Dorsolateral prefrontal cortex (tissue), 120 donors: ENCODE measurements at regions of chr12 and their contacts with region 1.

Region 1: DNA sequence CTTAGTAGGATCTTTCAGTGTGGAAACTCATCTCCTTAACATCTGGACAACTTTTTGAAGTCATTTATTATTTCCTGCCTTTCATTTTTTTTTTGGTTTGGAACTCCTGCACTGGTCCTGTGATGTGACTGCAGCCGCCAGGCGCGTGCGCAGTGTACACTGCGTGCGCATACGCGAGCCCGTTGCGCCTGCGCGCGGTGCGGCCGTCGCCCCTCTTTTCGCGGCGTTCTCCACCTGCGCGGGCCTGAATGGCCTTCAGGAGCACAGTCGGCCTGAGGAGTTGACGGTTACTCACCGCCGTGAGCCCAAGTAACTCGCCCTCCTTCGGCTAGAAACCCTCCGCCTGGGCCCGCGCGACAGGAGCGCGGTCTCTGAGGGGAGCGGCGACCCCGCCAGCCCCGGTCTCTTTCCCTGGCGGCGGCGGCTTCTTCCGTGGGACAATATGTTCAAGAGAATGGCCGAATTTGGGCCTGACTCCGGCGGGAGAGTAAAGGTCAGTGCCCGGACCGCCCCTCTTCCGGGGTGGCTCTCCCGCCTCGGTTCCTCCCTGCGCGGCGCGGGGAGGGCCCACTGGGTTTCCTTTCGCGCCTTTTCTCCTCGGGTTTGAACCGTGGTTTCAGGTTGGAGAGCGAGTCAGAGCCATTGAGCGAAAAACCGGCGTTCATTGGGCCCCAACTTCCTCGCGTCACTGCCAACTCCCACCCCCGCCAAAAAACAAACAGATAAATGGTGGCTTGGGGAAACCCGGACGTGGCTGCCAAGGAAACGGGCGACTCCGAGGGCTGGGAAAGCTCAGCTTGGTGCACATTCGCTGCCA is at the start of gene YEATS4:
- DNase-seq: peak; percentile 71 to 89 (median 80)
- H3K4me3 ChIP-seq: peak within 1 kb of the TSS; percentile 67 to 100 (median 92)
- H3K27ac ChIP-seq: peak within 1 kb of the TSS; percentile 79 to 100 (median 97)
- H3K27me3 ChIP-seq: no peaks in the 10 kb centered on the region
- CTCF ChIP-seq: peak in 38 of 56 donors; percentile 2 to 58 (median 31)
- total RNA-seq, gene YEATS4: 5.6 to 22.9 (median 12.7) TPM

Region 2: GRCh38 chr12:69157023-69157655 is 202.6 kb before region 1 on chr12:
- intact Hi-C with region 1: loop called in 1 of 2 experiments (anchors 10 kb)
- DNase-seq: peak; percentile 44 to 89 (median 80)
- H3K4me3 ChIP-seq: peak overlapping the region in 45 of 59 donors; percentile 5 to 55 (median 33)
- H3K27ac ChIP-seq: peak overlapping the region in 2 of 59 donors; percentile 7 to 8
- H3K27me3 ChIP-seq: no peaks in the 10 kb centered on the region
- CTCF ChIP-seq: peak; percentile 58 to 97 (median 90)

Region 3: GRCh38 chr12:69290545-69291277 is 69.0 kb before region 1 on chr12:
- intact Hi-C with region 1: loop called in 1 of 2 experiments (anchors 5 kb)
- DNase-seq: peak; percentile 18 to 79 (median 66)
- H3K4me3 ChIP-seq: no peak overlapping the region
- H3K27ac ChIP-seq: no peak overlapping the region
- H3K27me3 ChIP-seq: peaks cover 0 to 18% (median 0%) of the 10 kb centered on the region in 45 donors
- CTCF ChIP-seq: peak; percentile 30 to 94 (median 83)

Region 4: DNA sequence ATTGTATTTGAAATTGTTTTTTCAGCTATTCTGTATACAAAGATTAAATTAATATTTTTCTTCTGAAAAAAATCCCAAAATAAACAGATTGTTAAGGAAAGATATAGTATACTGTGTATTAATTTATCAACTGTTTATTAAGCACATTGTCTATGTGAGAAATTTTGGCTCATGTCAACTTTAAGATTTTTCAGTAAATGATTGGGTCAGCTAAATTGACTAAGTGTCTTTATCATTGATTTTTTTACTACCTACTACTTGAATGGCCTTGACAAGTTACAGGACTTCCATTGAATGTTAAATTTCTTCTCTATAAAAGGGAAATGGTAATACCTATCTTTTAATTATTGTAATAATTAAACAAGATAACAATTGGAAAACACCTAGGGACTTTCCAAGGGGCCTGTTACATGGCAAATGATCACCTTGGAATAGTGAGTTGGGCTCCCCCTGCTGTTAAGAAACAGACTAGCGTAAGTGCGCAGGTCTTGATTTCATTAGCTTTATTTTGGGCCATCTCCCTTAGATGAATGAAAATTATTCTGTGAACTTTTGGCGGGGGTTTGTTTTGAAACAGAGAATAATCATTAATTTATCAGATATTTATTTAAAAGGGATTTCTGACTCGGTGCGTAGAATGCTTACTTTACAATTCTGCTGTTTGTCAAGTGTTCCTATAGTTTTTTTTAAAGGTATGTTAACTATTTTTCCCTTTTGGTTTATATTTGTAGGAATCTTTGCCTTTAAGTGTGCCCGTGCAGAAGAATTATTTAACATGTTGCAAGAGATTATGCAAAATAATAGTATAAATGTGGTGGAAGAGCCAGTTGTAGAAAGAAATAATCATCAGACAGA is 211.0 kb after region 1 on chr12:
- intact Hi-C with region 1: loop called in 1 of 2 experiments (anchors 10 kb)
- DNase-seq: peak in 4 of 10 donors; percentile 11 to 63 (median 54)
- H3K4me3 ChIP-seq: no peak overlapping the region
- H3K27ac ChIP-seq: no peak overlapping the region
- H3K27me3 ChIP-seq: no peaks in the 10 kb centered on the region
- CTCF ChIP-seq: peak; percentile 52 to 94 (median 79)

Region 5: DNA sequence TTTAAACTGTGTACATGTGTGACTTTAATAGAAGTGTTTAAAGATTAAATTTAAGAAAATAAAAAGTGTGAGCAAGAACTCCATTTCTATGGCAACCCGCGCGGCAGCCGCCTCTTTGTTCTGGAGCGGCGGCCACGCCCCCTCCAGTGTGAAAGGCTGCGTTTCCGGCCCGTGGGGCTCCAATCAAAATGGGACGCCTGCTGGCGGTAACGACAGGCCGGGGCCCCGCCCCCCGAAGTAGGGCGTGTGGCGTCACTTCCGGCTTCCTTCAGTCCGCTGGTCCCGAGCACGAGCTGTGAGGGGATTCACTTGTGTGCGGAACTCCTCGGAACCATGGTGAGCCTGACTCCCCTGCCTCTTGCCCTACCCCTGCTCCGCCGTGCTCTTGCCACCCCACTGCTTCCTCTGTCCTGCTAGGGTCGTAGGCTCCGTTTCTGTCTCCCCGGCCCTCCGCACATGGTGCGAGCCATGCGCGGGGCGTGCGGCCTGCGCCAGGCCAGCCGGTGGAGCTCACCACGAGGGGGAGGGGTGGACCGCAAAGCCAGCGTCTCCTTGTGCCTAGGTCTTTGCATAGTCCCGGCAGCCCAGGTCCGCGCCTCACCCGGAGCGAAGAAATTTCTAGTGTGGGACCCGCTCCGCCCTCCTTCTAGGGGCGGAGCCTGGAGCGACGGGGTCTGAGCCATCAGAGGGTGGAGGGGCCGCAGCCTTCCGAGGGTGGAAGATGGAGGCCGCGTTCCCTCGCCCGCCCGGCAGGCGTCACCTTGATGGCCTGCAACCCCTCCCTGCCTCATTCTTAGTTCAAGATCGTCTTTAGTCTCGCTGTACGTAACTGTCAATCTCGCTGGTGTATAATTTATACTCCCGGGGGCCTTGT is 225.7 kb after region 1 on chr12 and contains the start of gene CCT2:
- intact Hi-C with region 1: loop called in 1 of 2 experiments (anchors 5 kb)
- DNase-seq: peak; percentile 97 to 99 (median 98)
- H3K4me3 ChIP-seq: peak within 1 kb of the TSS; percentile 63 to 100 (median 95)
- H3K27ac ChIP-seq: peak within 1 kb of the TSS in 56 of 59 donors; percentile 5 to 96 (median 83)
- H3K27me3 ChIP-seq: no peaks in the 10 kb centered on the region
- CTCF ChIP-seq: peak in 51 of 56 donors; percentile 6 to 66 (median 39)
- total RNA-seq, gene CCT2: 66.9 to 156 (median 104) TPM

Region 6: GRCh38 chr12:69639400-69640016 is 279.8 kb after region 1 on chr12:
- intact Hi-C with region 1: loop called in 1 of 2 experiments (anchors 5 kb)
- DNase-seq: peak in 7 of 10 donors; percentile 26 to 70 (median 42)
- H3K4me3 ChIP-seq: no peak overlapping the region
- H3K27ac ChIP-seq: no peak overlapping the region
- H3K27me3 ChIP-seq: no peaks in the 10 kb centered on the region
- CTCF ChIP-seq: peak in 55 of 56 donors; percentile 34 to 88 (median 74)

Region 7: GRCh38 chr12:70733385-70733784 is 1373.6 kb after region 1 on chr12:
- intact Hi-C with region 1: loop called in 1 of 2 experiments (anchors 10 kb)
- DNase-seq: peak in 3 of 10 donors; percentile 39 to 57 (median 52)
- H3K4me3 ChIP-seq: no peak overlapping the region
- H3K27ac ChIP-seq: no peak overlapping the region
- H3K27me3 ChIP-seq: no peaks in the 10 kb centered on the region
- CTCF ChIP-seq: peak; percentile 42 to 91 (median 81)